Activated CD4-positive, alpha-beta T cell treated with anti-CD3 and anti-CD28 coated beads for 36 hours (primary cell): ENCODE measurements at regions of chr1 and their contacts with region 1.

Region 1: GRCh38 chr1:84620720-84621313 is 46.6 kb upstream of the CTBS start:
- DNase-seq: peak; percentile 91
- ATAC-seq: peak; percentile 90
- H3K4me3 Mint-ChIP-seq: peak overlapping the region; percentile 80
- H3K27ac Mint-ChIP-seq: peak overlapping the region; percentile 91
- H3K4me1 Mint-ChIP-seq: peaks cover 20% of the 10 kb centered on the region
- H3K27me3 Mint-ChIP-seq: no peaks in the 10 kb centered on the region

Region 2: DNA sequence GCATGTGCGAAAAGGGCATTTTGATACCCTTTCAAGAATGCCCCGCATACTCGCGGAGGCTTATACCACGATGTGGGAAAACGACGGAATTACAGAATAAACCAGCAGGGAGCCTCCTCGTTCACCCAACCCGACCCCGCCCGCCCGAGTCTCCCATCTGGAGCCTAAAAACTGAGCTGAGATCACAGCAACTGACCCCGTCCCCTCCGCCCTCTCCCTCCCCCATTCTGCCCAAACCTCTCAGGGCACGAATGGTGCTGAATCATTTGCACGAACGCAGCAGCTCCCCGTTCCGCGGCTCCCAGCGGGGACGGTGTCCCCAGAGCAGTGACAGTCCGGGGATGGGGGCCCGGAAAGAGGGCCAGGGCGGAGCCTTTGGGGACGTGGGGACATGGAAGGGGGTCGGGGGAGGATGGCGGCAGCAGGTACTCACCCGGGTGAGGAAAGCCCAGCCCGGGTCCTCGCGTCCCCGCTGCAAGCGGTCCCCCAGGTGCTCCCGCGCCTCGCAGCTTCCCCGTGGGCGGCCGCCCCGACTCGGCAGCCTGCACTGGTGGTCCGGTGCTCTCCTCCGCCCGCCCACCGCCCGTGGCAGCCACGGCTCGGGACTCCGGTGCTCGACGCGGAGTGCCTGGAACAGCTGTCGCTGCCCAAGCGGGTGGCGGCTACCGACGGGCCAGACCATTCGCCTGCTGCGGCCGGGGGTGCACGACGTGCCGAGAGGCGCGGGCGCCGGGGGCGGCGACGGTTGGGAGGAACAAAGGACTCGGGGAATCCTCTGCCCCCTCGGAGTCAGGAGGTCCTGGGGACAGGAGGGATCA is 622.1 kb before region 1 on chr1 and contains the start of gene TTLL7:
- CTCF ChIA-PET with region 1: no interaction called
- POLR2A ChIA-PET with region 1: no interaction called
- intact Hi-C with region 1: loop called in 1 of 2 experiments (anchors 5 kb)
- DNase-seq: peak; percentile 79
- ATAC-seq: peak; percentile 79
- H3K4me3 Mint-ChIP-seq: peak within 1 kb of the TSS; percentile 77
- H3K27ac Mint-ChIP-seq: peak within 1 kb of the TSS; percentile 49
- H3K4me1 Mint-ChIP-seq: peaks cover 12% of the 10 kb centered on the region
- H3K27me3 Mint-ChIP-seq: peaks cover 62% of the 10 kb centered on the region
- total RNA-seq, gene TTLL7: 1.4 to 2.6 TPM

Region 3: DNA sequence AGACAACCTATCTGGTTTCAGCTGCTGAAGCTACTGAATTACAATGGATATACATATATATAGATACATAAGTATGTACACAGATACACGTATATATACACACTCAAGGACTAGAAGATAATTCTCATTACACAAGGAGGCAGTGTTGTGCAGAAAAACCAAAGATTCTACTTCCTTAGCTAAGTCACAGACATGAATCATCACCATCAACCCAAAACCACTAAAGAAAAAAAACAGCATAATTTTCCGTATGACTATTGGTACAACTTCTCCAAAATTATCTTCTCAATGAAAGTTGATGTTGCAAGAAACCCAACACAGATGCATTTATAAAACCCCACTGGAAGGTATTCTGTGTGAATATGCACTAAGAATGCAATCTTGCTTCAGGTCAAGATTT is 178.6 kb before region 1 on chr1:
- CTCF ChIA-PET with region 1: interaction called, 31 read pairs
- POLR2A ChIA-PET with region 1: no interaction called
- intact Hi-C with region 1: loop called (anchors 1 kb)
- DNase-seq: no peak
- ATAC-seq: peak; percentile 99
- H3K4me3 Mint-ChIP-seq: no peak overlapping the region
- H3K27ac Mint-ChIP-seq: no peak overlapping the region
- H3K4me1 Mint-ChIP-seq: peaks cover 23% of the 10 kb centered on the region
- H3K27me3 Mint-ChIP-seq: peaks cover 5% of the 10 kb centered on the region

Region 4: GRCh38 chr1:84573967-84574842 is 46.6 kb before region 1 on chr1 and contains the start of gene CTBS:
- CTCF ChIA-PET with region 1: interaction called, 28 read pairs
- POLR2A ChIA-PET with region 1: interaction called, 12 read pairs
- intact Hi-C with region 1: loop called (anchors 1 kb)
- DNase-seq: peak; percentile 94
- ATAC-seq: peak; percentile 85
- H3K4me3 Mint-ChIP-seq: peak within 1 kb of the TSS; percentile 97
- H3K27ac Mint-ChIP-seq: peak within 1 kb of the TSS; percentile 99
- H3K4me1 Mint-ChIP-seq: peaks cover 45% of the 10 kb centered on the region
- H3K27me3 Mint-ChIP-seq: no peaks in the 10 kb centered on the region
- total RNA-seq, gene CTBS: 13.5 to 17.3 TPM

Region 5: DNA sequence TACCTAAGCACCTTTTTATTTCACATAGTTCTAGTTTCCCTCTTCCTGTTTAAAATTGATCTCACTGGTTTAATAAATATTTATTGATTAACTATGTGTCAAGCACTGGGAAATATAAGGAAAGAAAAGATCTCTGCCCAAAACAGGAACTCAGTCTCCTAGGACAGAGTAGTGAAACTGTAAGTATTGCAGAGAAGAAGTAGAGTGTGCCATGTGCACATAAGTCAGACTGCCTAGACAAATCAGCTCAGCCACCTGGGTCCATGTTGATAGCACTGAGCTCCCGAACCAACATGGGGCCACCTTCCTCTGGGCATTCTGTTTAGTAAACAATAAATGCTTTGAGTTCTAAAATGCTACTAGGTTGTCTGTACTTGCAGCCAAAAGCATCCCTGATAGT is 79.3 kb after region 1 on chr1:
- CTCF ChIA-PET with region 1: no interaction called
- POLR2A ChIA-PET with region 1: no interaction called
- intact Hi-C with region 1: no loop called
- DNase-seq: no peak
- ATAC-seq: peak; percentile 16
- H3K4me3 Mint-ChIP-seq: no peak overlapping the region
- H3K27ac Mint-ChIP-seq: no peak overlapping the region
- H3K4me1 Mint-ChIP-seq: peaks cover 15% of the 10 kb centered on the region
- H3K27me3 Mint-ChIP-seq: no peaks in the 10 kb centered on the region

Region 6: DNA sequence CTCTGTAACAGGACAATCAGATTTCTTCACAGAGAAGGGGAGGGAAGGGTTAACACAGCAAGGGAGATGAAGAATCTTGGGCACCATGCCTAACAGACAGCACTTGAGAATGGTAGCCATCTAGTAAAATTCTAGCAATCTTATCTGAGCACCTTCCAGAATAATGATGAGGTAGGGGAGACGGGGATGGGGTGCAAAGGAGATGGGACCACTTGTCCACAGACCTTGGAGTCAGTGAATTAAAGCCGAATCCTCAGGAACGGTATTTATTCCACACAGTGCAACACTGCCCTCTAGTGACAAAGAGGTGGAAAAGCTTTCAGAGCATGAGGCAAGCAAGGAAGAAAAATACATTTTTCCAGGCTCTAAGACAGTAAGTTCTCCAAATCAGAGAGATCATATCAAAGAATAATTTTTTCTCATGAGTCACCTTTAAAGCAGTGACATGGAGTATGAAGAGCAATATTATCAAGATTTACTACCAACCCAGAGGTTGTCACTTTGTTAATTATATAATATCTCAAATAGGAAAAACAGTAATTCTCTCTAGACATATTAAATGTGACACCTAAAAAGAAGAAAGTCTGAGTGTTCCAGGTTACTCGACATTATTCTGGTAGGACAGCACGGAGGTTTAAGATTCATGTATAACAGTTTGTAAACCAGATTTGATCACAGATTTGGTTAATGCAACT is 315.4 kb after region 1 on chr1:
- CTCF ChIA-PET with region 1: interaction called, 3 read pairs
- POLR2A ChIA-PET with region 1: no interaction called
- intact Hi-C with region 1: loop called in 1 of 2 experiments (anchors 1 kb)
- DNase-seq: peak; percentile 25
- ATAC-seq: peak; percentile 53
- H3K4me3 Mint-ChIP-seq: no peak overlapping the region
- H3K27ac Mint-ChIP-seq: no peak overlapping the region
- H3K4me1 Mint-ChIP-seq: peaks cover 4% of the 10 kb centered on the region
- H3K27me3 Mint-ChIP-seq: no peaks in the 10 kb centered on the region